ENCODE measurements at regions of chr4 and their contacts with region 1.

Region 1: GRCh38 chr4:52983563-52984303 is 121.6 kb downstream of the RASL11B start:
- DNase-seq: no peak
- ATAC-seq: peak; percentile 73 to 90 (median 76)
- H3K4me3 ChIP-seq: no peak overlapping the region
- H3K27ac ChIP-seq: no peak overlapping the region
- H3K4me1 ChIP-seq: no peaks in the 10 kb centered on the region
- H3K27me3 ChIP-seq: no peaks in the 10 kb centered on the region
- CTCF ChIP-seq: peak; percentile 77

Region 2: GRCh38 chr4:52234561-52235440 is 748.9 kb before region 1 on chr4:
- intact Hi-C with region 1: loop called (anchors 10 kb)
- DNase-seq: no peak
- ATAC-seq: peak; percentile 43 to 69 (median 55)
- H3K4me3 ChIP-seq: no peak overlapping the region
- H3K27ac ChIP-seq: no peak overlapping the region
- H3K4me1 ChIP-seq: no peaks in the 10 kb centered on the region
- H3K27me3 ChIP-seq: no peaks in the 10 kb centered on the region
- CTCF ChIP-seq: peak; percentile 63

Region 3: GRCh38 chr4:52376132-52376704 is 607.5 kb before region 1 on chr4:
- intact Hi-C with region 1: loop called (anchors 2 to 5 kb)
- DNase-seq: no peak
- ATAC-seq: no peak
- H3K4me3 ChIP-seq: no peak overlapping the region
- H3K27ac ChIP-seq: no peak overlapping the region
- H3K4me1 ChIP-seq: no peaks in the 10 kb centered on the region
- H3K27me3 ChIP-seq: no peaks in the 10 kb centered on the region
- CTCF ChIP-seq: peak; percentile 63

Region 4: DNA sequence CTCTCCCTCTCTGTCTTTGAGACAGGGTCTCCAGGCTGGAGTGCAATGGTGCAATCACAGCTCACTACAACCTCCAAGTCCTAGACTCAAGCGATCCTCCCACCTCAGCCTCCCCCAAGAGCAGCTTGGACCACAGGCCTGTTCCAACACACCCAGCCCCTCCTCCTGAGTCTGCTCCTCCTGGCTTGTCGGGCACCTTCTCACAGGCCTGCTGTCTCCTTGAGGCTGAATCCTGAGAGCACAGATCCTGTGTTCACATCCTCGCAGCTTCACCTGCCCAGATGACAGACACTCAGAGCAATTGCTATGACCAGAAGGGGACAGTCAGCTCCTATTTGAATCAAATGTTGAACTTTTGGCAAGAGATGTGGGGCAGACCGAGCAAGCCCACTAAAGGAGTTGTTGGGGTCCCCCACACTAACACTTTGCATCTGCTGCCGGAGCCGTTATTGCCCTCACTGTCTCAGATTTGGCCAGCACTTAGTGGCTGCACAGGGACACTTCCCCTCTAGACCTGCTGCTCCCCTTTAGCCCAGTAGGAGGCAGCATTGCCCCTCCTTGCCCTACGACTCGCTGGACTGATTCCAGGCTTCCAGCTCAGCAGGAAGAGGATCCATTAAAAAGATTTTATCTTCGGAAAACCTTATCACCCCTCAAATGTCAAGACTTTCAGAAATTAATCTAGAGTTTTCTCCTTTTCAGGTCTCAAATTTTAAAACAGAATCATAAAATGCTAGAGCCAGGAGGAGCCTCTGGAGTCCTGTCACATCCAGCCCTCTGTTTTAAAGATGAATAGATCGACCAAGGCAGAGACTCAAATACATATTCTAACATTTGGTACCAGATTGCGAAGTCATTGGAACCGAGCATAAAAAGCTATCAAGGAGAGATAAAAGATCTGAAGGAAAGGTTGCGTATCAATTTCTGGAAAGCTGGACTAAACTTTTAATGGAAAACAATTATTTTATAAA is 438.3 kb before region 1 on chr4:
- intact Hi-C with region 1: loop called (anchors 2 kb)
- DNase-seq: peak; percentile 57 to 80
- ATAC-seq: peak; percentile 77 to 89 (median 84)
- H3K4me3 ChIP-seq: no peak overlapping the region
- H3K27ac ChIP-seq: no peak overlapping the region
- H3K4me1 ChIP-seq: no peaks in the 10 kb centered on the region
- H3K27me3 ChIP-seq: no peaks in the 10 kb centered on the region
- CTCF ChIP-seq: peak; percentile 87

Region 5: DNA sequence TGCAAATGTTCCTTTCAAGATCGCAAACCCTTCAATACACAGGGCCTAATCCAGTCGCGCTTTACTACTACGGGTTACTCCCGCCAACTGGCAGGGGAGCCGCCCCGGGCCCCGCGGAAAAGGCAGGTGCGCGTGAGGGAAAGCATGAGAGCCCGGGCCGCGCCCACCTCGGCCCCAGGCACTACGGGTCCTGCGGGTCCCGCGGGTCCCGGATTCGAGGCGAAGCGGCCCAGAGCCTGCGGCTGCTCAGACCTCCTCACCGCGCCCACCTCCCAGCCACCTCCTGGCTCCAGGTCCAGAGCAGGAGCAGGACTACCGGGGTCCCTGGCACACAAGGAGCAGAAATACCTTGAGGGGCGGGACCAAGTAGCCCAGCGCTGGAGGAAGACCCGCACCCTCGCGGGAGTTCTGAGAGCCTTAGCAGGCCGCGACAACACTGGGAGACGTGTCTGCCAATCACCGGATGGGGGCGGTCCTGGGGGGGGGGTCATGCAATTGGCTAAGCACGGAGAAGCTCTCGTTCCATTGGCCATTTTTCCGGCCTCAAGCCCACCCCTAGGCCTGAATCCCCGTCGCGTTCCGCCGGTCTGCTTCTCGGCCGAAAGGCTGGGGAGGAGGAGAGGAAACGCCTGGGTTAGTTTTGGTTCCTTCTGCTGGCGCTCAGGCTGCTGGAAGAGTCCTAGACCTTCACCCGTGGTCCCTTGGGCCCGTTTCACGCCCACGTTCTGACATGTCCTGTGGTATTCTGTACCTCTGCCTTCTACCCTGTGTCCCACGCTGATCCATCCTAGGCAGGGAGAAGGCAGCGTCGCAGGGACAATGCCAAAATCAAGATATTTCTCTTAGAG is 261.5 kb before region 1 on chr4:
- intact Hi-C with region 1: loop called in 1 of 2 experiments (anchors 10 kb)
- DNase-seq: peak; percentile 94
- ATAC-seq: peak; percentile 98 to 99 (median 98)
- H3K4me3 ChIP-seq: peak overlapping the region; percentile 84
- H3K27ac ChIP-seq: peak overlapping the region; percentile 88
- H3K4me1 ChIP-seq: peaks cover 3% of the 10 kb centered on the region
- H3K27me3 ChIP-seq: no peaks in the 10 kb centered on the region
- CTCF ChIP-seq: no peak

Region 6: GRCh38 chr4:52911684-52912294 is 71.9 kb before region 1 on chr4:
- intact Hi-C with region 1: loop called (anchors 2 to 5 kb)
- DNase-seq: peak; percentile 59 to 73
- ATAC-seq: peak; percentile 64 to 80 (median 72)
- H3K4me3 ChIP-seq: no peak overlapping the region
- H3K27ac ChIP-seq: no peak overlapping the region
- H3K4me1 ChIP-seq: no peaks in the 10 kb centered on the region
- H3K27me3 ChIP-seq: no peaks in the 10 kb centered on the region
- CTCF ChIP-seq: peak; percentile 70

Region 7: DNA sequence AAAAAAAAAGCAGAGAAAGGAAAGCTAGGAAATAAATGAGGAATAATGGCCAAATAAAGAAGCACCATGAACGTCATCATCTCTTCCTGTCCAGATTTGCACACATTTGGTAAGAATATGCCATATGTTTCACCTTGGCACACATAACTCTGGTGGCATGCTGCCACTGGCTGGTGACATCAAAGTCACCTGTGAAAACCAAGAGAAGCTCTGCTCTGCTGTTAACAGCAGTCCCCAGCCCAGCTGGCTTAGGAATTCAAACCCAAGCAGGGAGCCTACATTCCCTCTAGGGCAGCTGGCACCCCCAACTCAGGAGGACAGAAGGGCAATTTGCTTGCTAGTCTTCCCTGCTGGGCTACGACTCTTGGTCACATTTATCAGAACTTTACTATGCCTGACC is 44.0 kb before region 1 on chr4:
- intact Hi-C with region 1: no loop called
- DNase-seq: no peak
- ATAC-seq: peak in 2 of 4 donors; percentile 25 to 33
- H3K4me3 ChIP-seq: no peak overlapping the region
- H3K27ac ChIP-seq: peak overlapping the region; percentile 75
- H3K4me1 ChIP-seq: peaks cover 28% of the 10 kb centered on the region
- H3K27me3 ChIP-seq: no peaks in the 10 kb centered on the region
- CTCF ChIP-seq: no peak

Measured in psoas muscle (tissue), 8 donors.